ENCODE measurements at regions of chr1 and their contacts with region 1.

Region 1: DNA sequence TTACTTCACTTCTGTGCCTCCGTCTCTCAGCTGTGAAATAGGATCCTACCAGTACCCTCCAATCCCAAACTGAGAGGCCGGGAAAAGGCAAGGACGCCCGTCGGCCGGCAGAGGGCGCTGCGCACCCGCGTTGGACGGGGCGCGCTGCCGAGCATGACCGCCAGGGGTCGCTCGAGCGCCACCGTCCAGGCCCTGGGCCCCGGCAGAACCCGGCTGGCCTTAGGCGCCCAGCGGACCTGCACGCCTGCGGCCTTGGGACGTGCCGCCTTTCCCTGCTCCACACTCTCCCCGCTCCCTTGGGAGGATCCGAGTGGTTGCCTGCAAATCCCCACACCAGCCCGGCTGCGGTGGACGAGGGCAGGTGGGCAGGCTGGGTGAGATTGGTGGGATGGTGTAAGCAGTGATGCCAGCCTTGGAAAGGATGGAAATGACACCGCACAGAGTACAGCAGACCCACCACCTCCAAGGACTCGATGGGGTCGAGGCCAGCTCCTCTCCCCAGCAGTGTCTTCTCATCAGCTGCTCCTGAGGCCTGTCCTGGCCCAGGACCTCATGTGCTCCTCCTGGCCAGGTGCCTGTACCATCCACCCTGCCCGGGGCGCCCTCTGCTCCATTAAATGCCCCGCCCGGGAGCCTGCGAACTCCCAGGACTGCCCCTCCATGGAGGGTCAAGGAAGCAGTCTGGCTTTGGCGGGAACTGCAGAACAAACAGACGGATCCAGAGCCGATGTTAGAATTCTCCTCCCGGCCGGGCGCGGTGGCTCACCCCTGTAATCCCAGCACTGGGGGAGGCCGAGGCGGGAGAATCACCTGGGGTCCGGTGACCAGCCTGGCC is 47.4 kb upstream of the LBR start:
- DNase-seq: peak; percentile 71
- ATAC-seq: peak; percentile 89
- H3K4me3 Mint-ChIP-seq: no peak overlapping the region
- H3K27ac Mint-ChIP-seq: no peak overlapping the region
- H3K4me1 Mint-ChIP-seq: peaks cover 14% of the 10 kb centered on the region; the same call in 1 of the 2 replicates
- H3K27me3 Mint-ChIP-seq: peaks cover 6% of the 10 kb centered on the region
- CTCF ChIP-seq: peak; percentile 100

Region 2: DNA sequence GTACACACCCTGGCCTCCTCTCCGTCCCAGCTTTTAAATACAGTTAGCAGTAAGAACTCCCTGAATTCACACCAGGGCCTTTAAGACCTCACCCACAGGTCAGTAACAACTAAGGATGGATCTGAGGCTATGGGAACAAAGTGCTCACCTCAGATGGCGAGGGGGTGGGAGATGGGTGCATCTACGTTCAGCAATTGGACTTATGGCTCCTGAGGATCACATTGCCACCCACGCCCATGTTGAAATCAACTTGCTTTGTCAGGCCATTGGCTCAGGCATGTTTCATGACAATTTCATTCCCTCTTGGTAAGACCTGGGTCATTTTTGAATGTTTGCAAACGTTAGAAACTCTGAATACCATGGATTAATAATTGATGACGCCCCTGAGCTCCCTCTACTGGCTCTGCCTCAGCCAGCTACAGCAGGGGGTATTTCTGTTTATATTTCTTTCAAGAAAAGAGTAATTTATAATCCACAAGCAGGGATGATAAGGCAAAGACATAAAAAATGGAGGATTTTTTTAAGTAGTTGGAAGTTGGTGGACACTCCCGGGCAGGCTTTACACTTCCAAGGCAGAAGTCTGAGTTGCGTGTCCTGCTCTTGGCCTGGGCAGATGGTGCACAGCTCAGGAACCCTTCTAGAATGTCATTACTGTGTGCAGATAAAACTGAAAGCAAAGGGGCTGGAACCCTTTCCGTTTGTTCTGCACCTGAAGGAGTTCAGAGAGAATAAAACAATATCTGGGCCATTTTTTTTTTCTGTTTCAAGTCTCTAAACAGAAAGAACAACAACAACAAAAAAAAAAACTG is 33.7 kb before region 1 on chr1:
- CTCF ChIA-PET with region 1: interaction called, 13 read pairs
- POLR2A ChIA-PET with region 1: no interaction called
- DNase-seq: no peak
- ATAC-seq: no peak
- H3K4me3 Mint-ChIP-seq: no peak overlapping the region
- H3K27ac Mint-ChIP-seq: no peak overlapping the region
- H3K4me1 Mint-ChIP-seq: peaks cover 19% of the 10 kb centered on the region
- H3K27me3 Mint-ChIP-seq: no peaks in the 10 kb centered on the region
- CTCF ChIP-seq: no peak

Region 3: DNA sequence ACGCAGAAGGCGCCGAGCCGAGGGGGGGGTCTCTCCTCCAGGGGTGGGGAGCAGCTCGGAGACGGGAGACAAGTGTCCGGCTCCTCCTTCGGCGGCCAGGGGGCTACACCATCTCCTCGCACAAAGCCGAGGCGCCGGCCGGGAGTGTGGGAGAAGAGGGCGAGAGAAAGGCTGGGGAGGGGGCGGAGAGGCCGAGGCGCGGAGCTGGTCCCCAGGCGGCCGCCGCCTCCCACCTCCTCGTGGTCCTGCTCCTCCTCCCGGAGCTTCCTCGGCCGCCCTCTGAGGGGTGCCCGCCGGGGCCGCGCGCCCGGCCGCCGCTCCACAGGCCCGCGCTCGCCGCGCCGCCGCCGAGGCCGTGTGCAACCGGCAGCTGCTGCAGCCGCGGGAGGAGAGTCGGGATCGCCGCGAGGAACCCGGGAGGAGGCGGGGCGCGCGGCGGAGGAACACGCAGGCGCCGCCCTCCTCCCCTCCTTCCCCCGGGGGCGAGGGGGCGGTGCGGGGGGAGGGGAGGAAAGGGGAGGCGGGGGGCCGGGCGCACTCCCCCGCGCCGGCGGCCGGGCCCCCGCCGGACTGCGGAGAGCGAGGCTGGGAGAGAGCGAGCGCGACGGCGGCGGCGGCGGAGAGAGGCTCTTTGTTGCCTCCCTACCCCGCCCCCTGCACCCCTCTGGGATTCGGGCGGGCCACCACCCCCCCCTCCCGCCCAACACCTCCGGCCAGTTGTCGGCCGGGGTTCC is 177.7 kb after region 1 on chr1 and contains the start of gene ENAH:
- CTCF ChIA-PET with region 1: interaction called, 26 read pairs
- POLR2A ChIA-PET with region 1: interaction called, 4 read pairs
- DNase-seq: peak; percentile 77
- ATAC-seq: peak; percentile 81
- H3K4me3 Mint-ChIP-seq: peak within 1 kb of the TSS; percentile 93
- H3K27ac Mint-ChIP-seq: peak within 1 kb of the TSS; percentile 98
- H3K4me1 Mint-ChIP-seq: peaks cover 49% of the 10 kb centered on the region
- H3K27me3 Mint-ChIP-seq: no peaks in the 10 kb centered on the region
- CTCF ChIP-seq: no peak
- total RNA-seq, gene ENAH: 223 to 229 TPM (median 227 TPM) in 3 replicates

Region 4: GRCh38 chr1:225772323-225772768 is 297.1 kb after region 1 on chr1:
- CTCF ChIA-PET with region 1: interaction called, 99 read pairs
- POLR2A ChIA-PET with region 1: interaction called, 8 read pairs
- DNase-seq: peak; percentile 88
- ATAC-seq: peak; percentile 86
- H3K4me3 Mint-ChIP-seq: no peak overlapping the region
- H3K27ac Mint-ChIP-seq: peak overlapping the region; percentile 77
- H3K4me1 Mint-ChIP-seq: peaks cover 53% of the 10 kb centered on the region
- H3K27me3 Mint-ChIP-seq: no peaks in the 10 kb centered on the region; the same call in 1 of the 2 replicates
- CTCF ChIP-seq: no peak

Region 5: DNA sequence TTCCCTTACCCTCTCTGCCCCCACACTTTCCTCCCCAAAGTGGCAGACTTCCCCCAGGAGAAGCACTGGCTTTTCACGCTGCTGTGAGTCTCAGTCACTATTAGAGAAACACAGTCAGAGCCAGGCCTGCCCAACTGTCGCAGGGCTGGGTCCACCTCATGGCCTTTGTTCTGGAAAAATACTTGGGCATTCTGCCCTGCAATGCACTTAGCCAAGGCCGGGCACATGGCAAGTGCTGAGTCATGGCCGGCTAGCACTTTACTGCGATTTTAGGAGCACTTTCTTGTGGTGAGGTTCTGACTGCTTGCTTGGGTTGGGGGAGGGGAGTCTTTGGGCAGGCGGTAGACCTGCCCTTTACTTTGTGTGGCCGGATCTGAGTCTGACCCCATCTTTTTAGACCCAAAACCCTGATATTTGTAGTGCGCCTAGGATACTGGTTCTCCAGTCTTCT is 342.4 kb after region 1 on chr1:
- CTCF ChIA-PET with region 1: interaction called, 18 read pairs
- POLR2A ChIA-PET with region 1: no interaction called
- DNase-seq: no peak
- ATAC-seq: peak; percentile 27
- H3K4me3 Mint-ChIP-seq: no peak overlapping the region
- H3K27ac Mint-ChIP-seq: peak overlapping the region; percentile 71
- H3K4me1 Mint-ChIP-seq: peaks cover 49% of the 10 kb centered on the region
- H3K27me3 Mint-ChIP-seq: no peaks in the 10 kb centered on the region; the same call in 1 of the 2 replicates
- CTCF ChIP-seq: no peak

Region 6: GRCh38 chr1:225845571-225846259 is 370.5 kb after region 1 on chr1:
- CTCF ChIA-PET with region 1: interaction called, 32 read pairs
- POLR2A ChIA-PET with region 1: no interaction called
- DNase-seq: peak; percentile 90
- ATAC-seq: peak; percentile 82
- H3K4me3 Mint-ChIP-seq: no peak overlapping the region
- H3K27ac Mint-ChIP-seq: peak overlapping the region; percentile 87
- H3K4me1 Mint-ChIP-seq: peaks cover 12% of the 10 kb centered on the region
- H3K27me3 Mint-ChIP-seq: no peaks in the 10 kb centered on the region
- CTCF ChIP-seq: peak; percentile 61

Region 7: GRCh38 chr1:225962440-225962975 is 487.3 kb after region 1 on chr1:
- CTCF ChIA-PET with region 1: interaction called, 10 read pairs
- POLR2A ChIA-PET with region 1: no interaction called
- DNase-seq: peak; percentile 91
- ATAC-seq: peak; percentile 98
- H3K4me3 Mint-ChIP-seq: no peak overlapping the region
- H3K27ac Mint-ChIP-seq: no peak overlapping the region
- H3K4me1 Mint-ChIP-seq: no peaks in the 10 kb centered on the region
- H3K27me3 Mint-ChIP-seq: peaks cover 37% of the 10 kb centered on the region
- CTCF ChIP-seq: peak; percentile 90